B cell (primary cell): ENCODE measurements at regions of chr22 and their contacts with region 1.

Region 1: GRCh38 chr22:30289134-30289979 is at the start of gene CASTOR1:
- DNase-seq: peak; percentile 86
- ATAC-seq: peak; percentile 83
- H3K4me3 ChIP-seq: peak within 1 kb of the TSS; percentile 48 to 83 (median 70)
- H3K4me3 Mint-ChIP-seq: peak within 1 kb of the TSS; percentile 93
- H3K27ac ChIP-seq: peak within 1 kb of the TSS; percentile 34 to 72
- H3K27ac Mint-ChIP-seq: peak within 1 kb of the TSS; percentile 93
- H3K4me1 ChIP-seq: peaks cover 23 to 44% of the 10 kb centered on the region in 2 donors
- H3K4me1 Mint-ChIP-seq: peaks cover 38% of the 10 kb centered on the region
- H3K27me3 ChIP-seq: no peaks in the 10 kb centered on the region
- H3K27me3 Mint-ChIP-seq: no peaks in the 10 kb centered on the region
- CTCF ChIP-seq: no peak
- total RNA-seq, gene CASTOR1: 12.3 and 16.3 TPM in 2 replicates

Region 2: GRCh38 chr22:30104501-30105156 is 184.7 kb before region 1 on chr22:
- CTCF ChIA-PET with region 1: interaction called, 31 read pairs
- POLR2A ChIA-PET with region 1: no interaction called
- intact Hi-C with region 1: loop called (anchors 1 kb)
- DNase-seq: no peak
- ATAC-seq: no peak
- H3K4me3 ChIP-seq: no peak overlapping the region
- H3K4me3 Mint-ChIP-seq: no peak overlapping the region
- H3K27ac ChIP-seq: no peak overlapping the region
- H3K27ac Mint-ChIP-seq: no peak overlapping the region
- H3K4me1 ChIP-seq: no peaks in the 10 kb centered on the region
- H3K4me1 Mint-ChIP-seq: peaks cover 5% of the 10 kb centered on the region
- H3K27me3 ChIP-seq: no peaks in the 10 kb centered on the region
- H3K27me3 Mint-ChIP-seq: peaks cover 12% of the 10 kb centered on the region
- CTCF ChIP-seq: no peak

Region 3: DNA sequence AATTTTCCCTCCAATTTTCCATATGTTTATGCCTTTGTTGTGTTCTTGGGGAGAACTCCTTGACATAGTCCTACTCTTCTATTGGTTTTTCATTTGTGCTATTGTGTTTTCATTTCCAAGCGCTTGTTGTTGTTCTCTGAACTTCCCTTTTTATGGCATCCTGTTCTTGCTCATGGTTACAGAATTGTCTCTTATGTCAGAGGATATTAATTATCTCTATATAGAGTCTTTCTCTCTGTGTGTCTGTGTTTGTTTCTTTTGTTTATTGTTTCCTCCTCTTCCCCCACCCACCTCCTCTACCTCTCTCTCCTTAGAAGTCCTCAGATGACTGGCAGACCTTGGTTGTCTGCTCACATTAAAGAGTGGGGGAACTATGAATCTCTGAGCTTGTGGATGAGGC is 139.1 kb before region 1 on chr22:
- CTCF ChIA-PET with region 1: no interaction called
- POLR2A ChIA-PET with region 1: no interaction called
- intact Hi-C with region 1: no loop called
- DNase-seq: no peak
- ATAC-seq: no peak
- H3K4me3 ChIP-seq: no peak overlapping the region
- H3K4me3 Mint-ChIP-seq: no peak overlapping the region
- H3K27ac ChIP-seq: no peak overlapping the region
- H3K27ac Mint-ChIP-seq: no peak overlapping the region
- H3K4me1 ChIP-seq: peaks cover 18 to 27% of the 10 kb centered on the region in 2 donors
- H3K4me1 Mint-ChIP-seq: peaks cover 11% of the 10 kb centered on the region
- H3K27me3 ChIP-seq: no peaks in the 10 kb centered on the region
- H3K27me3 Mint-ChIP-seq: peaks cover 16% of the 10 kb centered on the region
- CTCF ChIP-seq: no peak

Region 4: DNA sequence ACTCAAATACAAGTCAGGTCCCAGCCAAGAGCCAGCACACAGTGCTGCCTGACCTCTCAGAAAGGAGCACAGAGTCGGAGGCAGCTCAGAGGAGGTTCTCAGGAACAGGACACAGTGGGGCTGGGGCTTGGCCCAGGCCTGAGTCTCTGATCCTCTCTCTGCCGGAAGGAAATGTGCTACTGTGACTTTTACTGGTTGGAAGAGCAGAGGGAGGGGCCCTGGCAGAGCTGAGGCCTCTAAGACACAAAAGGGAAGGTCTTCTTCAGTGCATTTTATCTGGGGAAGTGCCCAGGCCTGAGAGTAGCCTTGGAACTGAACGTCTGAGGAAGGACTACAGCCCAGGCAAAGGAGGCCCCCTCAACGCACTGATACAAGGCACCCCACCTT is 16.2 kb after region 1 on chr22:
- CTCF ChIA-PET with region 1: interaction called, 229 read pairs
- POLR2A ChIA-PET with region 1: interaction called, 56 read pairs
- intact Hi-C with region 1: loop called (anchors 1 kb)
- DNase-seq: peak; percentile 75
- ATAC-seq: peak; percentile 59
- H3K4me3 ChIP-seq: peak overlapping the region; percentile 17 to 55 (median 43)
- H3K4me3 Mint-ChIP-seq: peak overlapping the region; percentile 80
- H3K27ac ChIP-seq: peak overlapping the region; percentile 73 to 86
- H3K27ac Mint-ChIP-seq: peak overlapping the region; percentile 89
- H3K4me1 ChIP-seq: peaks cover 100% of the 10 kb centered on the region in 2 donors
- H3K4me1 Mint-ChIP-seq: peaks cover 99% of the 10 kb centered on the region
- H3K27me3 ChIP-seq: no peaks in the 10 kb centered on the region
- H3K27me3 Mint-ChIP-seq: no peaks in the 10 kb centered on the region
- CTCF ChIP-seq: no peak

Region 5: GRCh38 chr22:30340911-30341685 is 51.7 kb after region 1 on chr22:
- CTCF ChIA-PET with region 1: interaction called, 14 read pairs
- POLR2A ChIA-PET with region 1: no interaction called
- intact Hi-C with region 1: no loop called
- DNase-seq: no peak
- ATAC-seq: no peak
- H3K4me3 ChIP-seq: no peak overlapping the region
- H3K4me3 Mint-ChIP-seq: no peak overlapping the region
- H3K27ac ChIP-seq: no peak overlapping the region
- H3K27ac Mint-ChIP-seq: no peak overlapping the region
- H3K4me1 ChIP-seq: no peaks in the 10 kb centered on the region
- H3K4me1 Mint-ChIP-seq: no peaks in the 10 kb centered on the region
- H3K27me3 ChIP-seq: no peaks in the 10 kb centered on the region
- H3K27me3 Mint-ChIP-seq: no peaks in the 10 kb centered on the region
- CTCF ChIP-seq: no peak

Region 6: DNA sequence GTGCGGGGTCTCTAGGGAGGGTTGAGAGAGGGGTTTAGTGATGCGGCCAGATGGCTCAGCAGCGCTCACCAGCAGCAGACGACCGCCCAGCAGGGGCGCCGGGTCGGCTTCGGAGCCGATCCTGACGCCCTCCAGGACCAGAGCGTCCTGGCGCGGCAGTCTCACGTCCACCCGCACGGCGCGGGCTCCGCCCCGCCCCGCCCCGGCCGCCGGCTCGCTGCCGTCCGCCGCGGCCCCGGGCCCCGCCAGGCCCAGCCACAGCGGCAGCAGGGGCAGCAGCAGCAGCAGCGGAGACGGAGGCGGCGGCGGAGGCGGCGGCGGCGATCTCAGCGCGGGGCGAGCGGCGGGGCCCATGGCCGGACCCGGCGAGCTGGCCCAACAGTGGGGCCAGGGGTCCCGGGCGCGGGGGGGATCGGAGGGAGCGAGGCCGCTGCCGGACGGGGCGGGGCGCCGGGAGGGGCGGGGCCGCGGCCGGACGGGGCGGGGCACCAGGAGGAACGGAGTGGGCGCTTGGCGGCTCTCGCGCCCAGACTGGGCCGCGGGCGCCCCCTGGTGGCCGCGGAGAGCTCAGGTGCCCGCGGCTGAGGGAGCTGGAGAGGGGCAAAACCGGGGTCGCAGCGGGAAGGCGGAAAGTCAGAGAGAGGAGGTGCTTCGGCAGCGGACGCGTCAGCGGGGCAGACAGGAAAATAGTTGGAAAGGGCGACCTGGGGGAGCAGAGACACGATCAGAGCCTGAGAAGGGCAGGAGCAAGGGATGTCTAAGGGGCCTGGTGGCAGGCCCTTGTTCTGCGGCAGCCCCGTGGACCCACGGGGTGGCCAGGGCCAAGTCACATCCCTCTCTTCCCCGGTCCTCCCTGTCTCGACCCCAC is 97.8 kb after region 1 on chr22 and contains the start of gene RNF215:
- CTCF ChIA-PET with region 1: interaction called, 510 read pairs
- POLR2A ChIA-PET with region 1: interaction called, 20 read pairs
- intact Hi-C with region 1: loop called (anchors 1 kb)
- DNase-seq: peak; percentile 90
- ATAC-seq: peak; percentile 88
- H3K4me3 ChIP-seq: peak within 1 kb of the TSS in 4 of 5 experiments; percentile 25 to 61 (median 42)
- H3K4me3 Mint-ChIP-seq: peak within 1 kb of the TSS; percentile 83
- H3K27ac ChIP-seq: no peak within 1 kb of the TSS
- H3K27ac Mint-ChIP-seq: peak within 1 kb of the TSS; percentile 54
- H3K4me1 ChIP-seq: peaks cover 14 to 20% of the 10 kb centered on the region in 2 donors
- H3K4me1 Mint-ChIP-seq: peaks cover 21% of the 10 kb centered on the region
- H3K27me3 ChIP-seq: no peaks in the 10 kb centered on the region
- H3K27me3 Mint-ChIP-seq: no peaks in the 10 kb centered on the region
- CTCF ChIP-seq: peak; percentile 84
- total RNA-seq, gene RNF215: 16.7 and 18.6 TPM in 2 replicates

Region 7: DNA sequence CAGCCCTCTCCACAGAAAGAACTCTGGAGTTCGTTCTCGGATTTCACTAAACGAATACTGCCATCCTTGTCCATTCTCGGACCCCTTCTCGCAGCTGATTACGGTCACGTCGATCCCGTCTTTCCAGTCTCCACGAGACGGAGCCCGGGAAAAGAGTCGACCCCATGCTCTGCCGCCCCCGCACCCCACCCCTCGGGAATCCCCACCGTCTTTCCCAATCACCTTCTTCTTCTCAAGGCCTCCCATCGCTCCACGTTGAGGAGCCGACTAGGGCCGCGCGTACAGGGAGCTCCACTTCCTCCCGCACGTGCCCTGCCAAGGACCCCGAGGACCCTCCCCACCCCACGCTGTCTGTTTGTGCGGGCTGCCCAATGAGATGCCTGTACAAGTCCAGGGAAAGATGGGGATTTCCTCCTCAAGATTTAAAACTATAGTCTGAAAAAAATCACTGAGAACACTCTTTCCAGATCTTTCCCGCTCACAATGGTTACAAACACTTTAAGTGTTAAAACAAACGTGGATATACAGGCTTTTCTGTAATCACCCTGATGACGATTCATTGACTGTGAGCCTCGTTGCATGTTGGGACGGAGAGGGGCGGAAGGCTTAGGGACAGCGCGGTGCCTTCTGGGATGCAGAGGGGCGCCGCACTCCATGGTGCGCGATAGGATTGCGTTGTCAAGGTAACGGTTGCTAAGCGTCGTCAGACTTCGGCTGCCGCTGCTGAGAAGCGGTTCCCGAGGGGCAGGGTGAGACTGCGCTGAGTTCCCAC is 302.4 kb after region 1 on chr22 and contains the start of gene PES1:
- CTCF ChIA-PET with region 1: no interaction called
- POLR2A ChIA-PET with region 1: no interaction called
- intact Hi-C with region 1: loop called (anchors 5 kb)
- DNase-seq: peak; percentile 99
- ATAC-seq: peak; percentile 94
- H3K4me3 ChIP-seq: peak within 1 kb of the TSS; percentile 81 to 95 (median 91)
- H3K4me3 Mint-ChIP-seq: no peak within 1 kb of the TSS
- H3K27ac ChIP-seq: peak within 1 kb of the TSS; percentile 95 to 98
- H3K27ac Mint-ChIP-seq: no peak within 1 kb of the TSS
- H3K4me1 ChIP-seq: peaks cover 14 to 22% of the 10 kb centered on the region in 2 donors
- H3K4me1 Mint-ChIP-seq: no peaks in the 10 kb centered on the region
- H3K27me3 ChIP-seq: peaks cover 0 to 2% (median under 1%) of the 10 kb centered on the region in 4 experiments
- H3K27me3 Mint-ChIP-seq: peaks cover 3% of the 10 kb centered on the region
- CTCF ChIP-seq: no peak
- total RNA-seq, gene PES1: 72.7 and 75.2 TPM in 2 replicates